ENCODE measurements at regions of chr3 and their contacts with region 1.

Region 1: DNA sequence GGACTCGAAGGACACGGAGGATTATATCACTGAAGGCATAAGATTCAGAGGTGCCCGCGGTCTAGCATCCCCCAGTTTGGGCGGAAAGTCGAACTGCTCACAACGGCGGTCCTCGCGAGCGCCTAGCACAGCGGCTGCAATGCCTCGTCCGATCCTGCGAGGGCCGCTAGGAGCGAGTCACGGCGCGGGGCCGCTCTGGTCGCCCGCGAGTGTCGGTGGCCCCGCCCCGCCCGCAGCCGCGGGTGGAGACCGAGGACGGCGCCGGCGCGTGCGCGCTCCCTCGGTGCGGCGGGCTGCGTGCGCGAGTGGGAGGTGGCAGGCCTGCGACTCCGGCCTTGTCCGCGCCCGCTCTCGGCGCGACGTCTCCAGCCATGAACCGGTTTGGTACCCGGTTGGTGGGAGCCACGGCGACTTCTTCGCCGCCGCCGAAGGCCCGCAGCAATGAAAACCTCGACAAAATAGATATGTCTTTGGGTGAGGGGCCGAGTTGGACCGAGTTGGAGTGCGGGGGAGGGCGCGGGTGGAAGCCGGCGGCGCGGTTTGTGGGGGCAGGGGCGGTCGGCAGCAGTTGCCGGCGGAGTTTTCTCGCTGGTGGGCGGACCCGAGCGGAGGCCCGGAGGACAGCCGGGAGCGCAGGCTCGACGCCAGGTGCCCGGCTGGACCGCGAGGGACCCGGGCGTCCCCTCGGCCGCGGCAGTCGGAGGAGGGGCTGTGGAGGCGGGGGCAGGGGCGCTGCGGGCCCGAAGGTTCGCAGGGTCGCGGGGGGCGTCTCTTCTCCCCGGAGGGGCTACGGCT is at the start of gene FYTTD1:
- DNase-seq: peak; percentile 81 to 90 (median 86)
- ATAC-seq: peak; percentile 79 to 83
- H3K4me3 Mint-ChIP-seq: peak within 1 kb of the TSS; percentile 88 to 100 (median 98)
- H3K27ac Mint-ChIP-seq: peak within 1 kb of the TSS; percentile 96 to 100 (median 98)
- H3K4me1 Mint-ChIP-seq: peaks cover 26 to 58% (median 49%) of the 10 kb centered on the region in 4 donors
- H3K27me3 Mint-ChIP-seq: no peaks in the 10 kb centered on the region
- polyA plus RNA-seq, gene FYTTD1: 93.5 to 123 (median 93.7) TPM

Region 2: DNA sequence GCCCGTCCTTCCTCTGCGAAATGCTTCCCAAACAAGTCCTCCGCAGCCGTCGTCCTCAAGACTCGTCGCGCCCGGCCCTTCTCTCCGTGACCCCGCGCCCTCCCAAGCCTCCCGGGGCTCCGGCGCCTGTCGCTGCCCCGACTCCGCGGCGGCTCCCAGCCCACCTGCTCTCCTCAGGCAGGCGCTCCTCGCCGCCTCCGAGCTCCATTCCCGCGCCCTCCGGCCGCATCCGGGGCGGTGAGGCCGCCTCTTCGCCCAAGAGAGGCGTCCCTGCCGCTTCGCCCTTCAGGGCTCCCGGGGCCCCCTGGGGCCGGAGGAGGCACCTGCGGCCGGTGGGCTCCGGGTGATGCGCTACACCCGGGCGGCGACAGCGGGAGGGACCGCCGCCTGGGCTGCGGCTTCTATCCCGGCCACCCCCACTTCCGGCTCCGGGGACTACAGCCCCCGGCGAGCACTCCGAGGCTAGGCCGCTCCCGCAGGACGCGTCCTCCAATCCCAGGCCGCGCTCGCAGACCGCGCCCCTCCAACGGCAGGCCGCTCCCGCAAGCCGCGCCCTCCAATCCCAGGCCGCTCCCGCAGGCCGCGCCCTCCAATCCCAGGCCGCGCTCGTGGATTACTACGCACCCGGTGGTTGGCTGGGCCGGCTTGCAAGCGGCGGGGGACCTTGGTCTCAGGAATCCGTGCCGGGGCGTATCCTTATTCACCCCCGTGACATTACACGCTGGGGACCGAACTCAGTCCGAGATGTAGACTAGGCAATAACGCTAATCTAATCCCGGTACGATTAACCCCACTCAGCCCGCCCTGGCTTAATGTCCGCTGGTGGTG is 13.1 kb before region 1 on chr3 and contains the start of gene RUBCN:
- POLR2A ChIA-PET with region 1: interaction called, 26 read pairs
- DNase-seq: peak; percentile 87 to 95 (median 92)
- ATAC-seq: peak; percentile 93 to 96
- H3K4me3 Mint-ChIP-seq: peak within 1 kb of the TSS; percentile 84 to 99 (median 94)
- H3K27ac Mint-ChIP-seq: peak within 1 kb of the TSS; percentile 81 to 98 (median 96)
- H3K4me1 Mint-ChIP-seq: peaks cover 18 to 51% (median 41%) of the 10 kb centered on the region in 4 donors
- H3K27me3 Mint-ChIP-seq: no peaks in the 10 kb centered on the region
- polyA plus RNA-seq, gene RUBCN: 20.3 to 23.6 (median 21.7) TPM

Region 3: DNA sequence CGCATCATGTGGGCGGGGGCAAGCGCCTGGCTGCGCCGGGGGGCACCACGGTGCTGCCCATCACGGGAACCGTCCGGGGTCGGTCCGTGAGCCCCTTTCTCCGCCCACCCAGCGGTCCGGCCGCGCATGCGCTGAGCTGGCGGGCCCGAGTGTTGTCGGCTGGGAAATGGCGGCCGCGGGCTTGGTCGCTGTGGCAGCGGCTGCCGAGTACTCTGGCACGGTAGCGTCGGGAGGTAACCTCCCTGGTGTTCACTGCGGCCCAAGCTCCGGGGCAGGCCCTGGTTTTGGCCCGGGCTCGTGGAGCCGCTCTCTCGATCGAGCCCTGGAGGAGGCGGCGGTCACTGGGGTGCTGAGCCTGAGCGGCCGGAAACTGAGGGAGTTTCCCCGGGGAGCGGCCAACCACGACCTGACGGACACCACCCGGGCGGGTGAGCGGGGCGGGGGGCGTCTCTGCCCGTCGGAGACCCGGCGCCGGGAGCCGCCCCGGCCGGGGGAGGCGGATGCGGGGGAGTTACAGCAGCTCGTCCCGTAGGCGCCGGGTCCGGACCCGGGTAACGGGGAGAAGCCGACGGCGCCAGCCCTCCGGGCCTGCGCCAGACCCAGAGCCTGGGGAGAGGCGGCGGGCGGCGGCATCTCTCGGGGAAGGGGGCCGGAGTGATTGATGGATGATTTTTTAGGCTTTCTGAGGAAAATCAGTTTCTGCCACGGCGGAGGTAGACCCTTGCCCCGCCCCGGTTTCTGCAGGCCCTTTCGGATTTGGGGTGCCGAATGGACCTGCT is 41.5 kb after region 1 on chr3 and contains the start of gene LRCH3:
- POLR2A ChIA-PET with region 1: interaction called, 24 read pairs
- DNase-seq: peak; percentile 71 to 89 (median 84)
- ATAC-seq: peak; percentile 81 to 83
- H3K4me3 Mint-ChIP-seq: peak within 1 kb of the TSS; percentile 88 to 99 (median 94)
- H3K27ac Mint-ChIP-seq: peak within 1 kb of the TSS; percentile 95 to 99 (median 98)
- H3K4me1 Mint-ChIP-seq: peaks cover 13 to 49% (median 37%) of the 10 kb centered on the region in 4 donors
- H3K27me3 Mint-ChIP-seq: no peaks in the 10 kb centered on the region
- polyA plus RNA-seq, gene LRCH3: 11.7 to 20.4 (median 16.6) TPM